ENCODE measurements at regions of chr7 and their contacts with region 1.

Region 1: DNA sequence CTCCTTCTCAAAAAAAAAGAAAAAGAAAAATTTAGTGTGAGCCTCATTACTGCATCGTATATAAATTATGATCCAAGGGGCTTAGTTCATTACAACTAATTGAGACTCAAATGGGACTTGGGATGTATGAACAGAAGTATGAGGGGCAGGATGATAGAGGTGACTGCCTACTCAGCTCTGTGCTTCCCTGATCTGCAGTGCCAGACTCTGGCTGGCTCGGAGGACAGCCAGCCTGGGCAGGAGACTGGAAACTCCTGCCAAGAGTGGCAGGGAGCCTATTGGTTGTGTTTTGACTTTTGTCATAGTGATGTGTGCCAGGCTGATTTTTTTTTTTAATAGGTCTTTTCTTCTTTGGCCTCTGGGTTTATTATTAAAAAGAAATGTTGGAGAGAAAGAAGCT is 73.8 kb upstream of the GTF2IRD1 start:
- DNase-seq: peak; percentile 39 to 73 (median 61)
- H3K4me3 ChIP-seq: no peak overlapping the region
- H3K27ac ChIP-seq: no peak overlapping the region
- H3K4me1 ChIP-seq: no peaks in the 10 kb centered on the region
- H3K27me3 ChIP-seq: no peaks in the 10 kb centered on the region
- CTCF ChIP-seq: no peak
- POLR2A ChIP-seq: no peak

Region 2: DNA sequence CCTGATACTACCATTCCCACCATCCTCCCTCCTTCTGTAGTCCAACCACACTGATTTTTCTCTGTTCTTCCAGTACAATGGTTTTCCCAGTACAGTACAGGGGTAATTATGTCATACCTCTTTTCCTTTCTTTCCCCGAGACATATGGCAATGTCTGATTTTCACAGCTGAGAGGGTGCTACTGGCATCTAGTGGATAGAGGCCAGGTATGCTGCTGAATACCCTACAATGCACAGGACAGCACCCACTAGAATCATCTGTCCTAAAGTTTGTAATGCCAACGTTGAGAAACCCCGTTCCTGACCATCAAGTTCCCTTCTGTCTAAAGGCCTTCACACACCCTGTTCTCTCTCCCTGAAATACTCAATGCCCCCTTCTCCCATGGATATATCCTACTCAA is 878.6 kb before region 1 on chr7:
- intact Hi-C with region 1: no loop called
- DNase-seq: no peak
- H3K4me3 ChIP-seq: no peak overlapping the region
- H3K27ac ChIP-seq: no peak overlapping the region
- H3K4me1 ChIP-seq: peaks cover 6 to 15% of the 10 kb centered on the region in 2 donors
- H3K27me3 ChIP-seq: no peaks in the 10 kb centered on the region
- CTCF ChIP-seq: no peak
- POLR2A ChIP-seq: no peak

Region 3: GRCh38 chr7:74343281-74344127 is 36.4 kb before region 1 on chr7:
- intact Hi-C with region 1: loop called in 1 of 2 experiments (anchors 5 kb)
- DNase-seq: peak; percentile 47 to 74 (median 67)
- H3K4me3 ChIP-seq: no peak overlapping the region
- H3K27ac ChIP-seq: peak overlapping the region in 2 of 5 donors; percentile 26 to 62
- H3K4me1 ChIP-seq: peaks cover 0 to 6% of the 10 kb centered on the region in 2 donors
- H3K27me3 ChIP-seq: no peaks in the 10 kb centered on the region
- CTCF ChIP-seq: no peak
- POLR2A ChIP-seq: no peak